HCT116 (cell line): ENCODE measurements at regions of chr17 and their contacts with region 1.

Region 1: DNA sequence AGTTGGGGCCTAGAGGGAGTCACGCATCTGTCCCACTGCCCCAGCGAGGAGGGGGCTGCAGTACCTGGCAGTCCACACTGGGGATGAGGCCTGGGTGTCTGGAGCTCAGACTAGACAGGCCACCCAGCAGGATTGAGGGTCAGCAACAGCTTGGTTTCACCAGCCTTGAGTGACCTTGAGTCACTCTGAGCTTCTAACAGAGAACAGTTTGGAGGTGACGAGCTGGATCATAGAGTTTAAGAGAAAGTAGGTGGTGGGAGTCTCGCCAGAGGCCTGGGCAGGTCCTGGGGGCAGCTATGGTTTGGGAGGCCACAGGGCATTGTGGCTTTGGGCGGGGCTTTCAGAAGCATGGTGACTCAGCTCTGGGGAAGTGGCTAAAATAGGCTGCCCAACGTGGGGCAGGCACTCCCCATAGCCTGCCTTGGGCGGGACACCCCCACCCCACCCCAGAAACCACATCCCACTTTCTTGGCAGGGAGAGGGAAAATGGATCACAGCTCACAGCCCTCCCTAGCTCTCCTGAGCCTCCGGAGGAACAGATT is 20.5 kb downstream of the CDC42EP4 start:
- DNase-seq: peak; percentile 79
- ATAC-seq: peak; percentile 83
- H3K4me3 ChIP-seq: peak overlapping the region; percentile 38 to 50
- H3K27ac ChIP-seq: peak overlapping the region; percentile 94
- H3K4me1 ChIP-seq: peaks cover 82 to 91% of the 10 kb centered on the region in 2 experiments
- H3K27me3 ChIP-seq: no peaks in the 10 kb centered on the region
- CTCF ChIP-seq: no peak
- POLR2A ChIP-seq: no peak
- RAD21 ChIP-seq: no peak

Region 2: DNA sequence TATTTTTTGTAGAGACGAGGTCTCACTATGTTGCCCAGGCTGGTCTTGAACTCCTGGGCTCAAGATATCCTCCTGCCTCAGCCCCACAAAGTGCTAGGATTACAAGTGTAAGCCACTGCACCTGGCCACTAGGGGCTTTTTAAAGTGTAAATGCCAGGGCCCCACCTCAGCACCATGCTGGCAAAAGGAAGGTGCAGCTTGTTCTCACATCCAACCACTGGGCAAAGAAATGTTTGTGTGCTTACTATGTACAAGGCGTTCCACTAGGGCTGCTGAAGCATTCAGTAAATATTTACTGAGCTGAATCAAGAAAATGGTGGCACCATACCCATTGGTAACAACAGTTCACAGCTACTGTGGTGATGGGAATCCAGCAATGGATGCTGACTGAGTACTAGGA is 75.9 kb before region 1 on chr17:
- CTCF ChIA-PET with region 1: no interaction called
- POLR2A ChIA-PET with region 1: no interaction called
- RAD21 ChIA-PET with region 1: no interaction called
- intact Hi-C with region 1: no loop called
- DNase-seq: no peak
- ATAC-seq: peak; percentile 92
- H3K4me3 ChIP-seq: no peak overlapping the region
- H3K27ac ChIP-seq: no peak overlapping the region
- H3K4me1 ChIP-seq: no peaks in the 10 kb centered on the region
- H3K27me3 ChIP-seq: no peaks in the 10 kb centered on the region
- CTCF ChIP-seq: peak in 2 of 3 experiments; percentile 68 to 69; a peak in 4 of 6 replicates
- POLR2A ChIP-seq: no peak
- RAD21 ChIP-seq: no peak

Region 3: GRCh38 chr17:73304971-73305812 is 13.9 kb after region 1 on chr17:
- CTCF ChIA-PET with region 1: interaction called, 4 read pairs
- POLR2A ChIA-PET with region 1: interaction called, 15 read pairs
- RAD21 ChIA-PET with region 1: interaction called, 3 to 7 read pairs
- intact Hi-C with region 1: loop called (anchors 1 kb)
- DNase-seq: peak; percentile 55
- ATAC-seq: peak; percentile 50
- H3K4me3 ChIP-seq: peak overlapping the region; percentile 51 to 56
- H3K27ac ChIP-seq: peak overlapping the region; percentile 70
- H3K4me1 ChIP-seq: peaks cover 71 to 93% of the 10 kb centered on the region in 2 experiments
- H3K27me3 ChIP-seq: no peaks in the 10 kb centered on the region
- CTCF ChIP-seq: peak in 2 of 3 experiments; percentile 53; a peak in 4 of 6 replicates
- POLR2A ChIP-seq: no peak
- RAD21 ChIP-seq: no peak

Region 4: GRCh38 chr17:73340093-73340596 is 48.8 kb after region 1 on chr17:
- CTCF ChIA-PET with region 1: no interaction called
- POLR2A ChIA-PET with region 1: no interaction called
- RAD21 ChIA-PET with region 1: no interaction called
- intact Hi-C with region 1: loop called (anchors 1 kb)
- DNase-seq: peak; percentile 71
- ATAC-seq: peak; percentile 88
- H3K4me3 ChIP-seq: peak overlapping the region in 1 of 2 experiments; percentile 3; a peak in 1 of 4 replicates
- H3K27ac ChIP-seq: no peak overlapping the region
- H3K4me1 ChIP-seq: peaks cover 11 to 43% of the 10 kb centered on the region in 2 experiments
- H3K27me3 ChIP-seq: no peaks in the 10 kb centered on the region
- CTCF ChIP-seq: peak in 2 of 3 experiments; percentile 55 to 63; a peak in 4 of 6 replicates
- POLR2A ChIP-seq: no peak
- RAD21 ChIP-seq: no peak